Activated CD8-positive, alpha-beta memory T cell treated with anti-CD3 and anti-CD28 coated beads, Interleukin-2, amount 10 ng/mL, durations not matched to agents 7 days and 5 days (primary cell): ENCODE measurements at regions of chr1 and their contacts with region 1.

Region 1: DNA sequence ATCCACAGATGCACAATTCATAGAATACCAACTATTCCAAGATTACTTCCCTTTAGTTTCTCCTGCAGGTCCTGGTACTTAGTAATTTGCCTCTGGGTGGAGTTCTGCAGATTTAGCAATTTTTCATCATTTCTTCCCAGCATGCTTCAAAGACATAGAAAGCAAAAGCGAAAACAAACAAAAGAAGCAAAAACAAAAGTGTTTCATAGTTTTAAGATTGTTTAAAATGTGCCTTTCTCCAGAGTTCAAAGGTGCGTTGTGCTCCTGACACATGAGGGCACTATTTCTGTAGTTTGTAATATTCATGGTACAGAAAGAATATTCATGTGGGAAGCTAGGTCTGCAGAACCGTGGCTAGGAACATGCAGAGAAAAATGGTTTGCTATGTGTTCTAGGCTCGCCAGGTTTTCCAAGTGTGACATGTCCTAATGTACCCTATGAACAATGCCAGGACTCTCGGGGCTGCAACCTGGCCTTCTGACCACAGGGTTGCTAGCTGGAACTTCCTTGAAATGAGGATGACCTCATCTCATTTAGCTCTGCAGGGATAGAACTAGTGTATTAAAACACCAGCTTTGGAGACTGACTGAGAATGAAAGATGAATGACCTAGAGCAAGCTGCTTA is 30.0 kb upstream of the RCSD1 start:
- DNase-seq: peak; percentile 63
- ATAC-seq: peak; percentile 90
- H3K4me3 Mint-ChIP-seq: peak overlapping the region; percentile 58
- H3K27ac Mint-ChIP-seq: peak overlapping the region; percentile 77
- H3K4me1 Mint-ChIP-seq: peaks cover 38% of the 10 kb centered on the region
- H3K27me3 Mint-ChIP-seq: no peaks in the 10 kb centered on the region

Region 2: DNA sequence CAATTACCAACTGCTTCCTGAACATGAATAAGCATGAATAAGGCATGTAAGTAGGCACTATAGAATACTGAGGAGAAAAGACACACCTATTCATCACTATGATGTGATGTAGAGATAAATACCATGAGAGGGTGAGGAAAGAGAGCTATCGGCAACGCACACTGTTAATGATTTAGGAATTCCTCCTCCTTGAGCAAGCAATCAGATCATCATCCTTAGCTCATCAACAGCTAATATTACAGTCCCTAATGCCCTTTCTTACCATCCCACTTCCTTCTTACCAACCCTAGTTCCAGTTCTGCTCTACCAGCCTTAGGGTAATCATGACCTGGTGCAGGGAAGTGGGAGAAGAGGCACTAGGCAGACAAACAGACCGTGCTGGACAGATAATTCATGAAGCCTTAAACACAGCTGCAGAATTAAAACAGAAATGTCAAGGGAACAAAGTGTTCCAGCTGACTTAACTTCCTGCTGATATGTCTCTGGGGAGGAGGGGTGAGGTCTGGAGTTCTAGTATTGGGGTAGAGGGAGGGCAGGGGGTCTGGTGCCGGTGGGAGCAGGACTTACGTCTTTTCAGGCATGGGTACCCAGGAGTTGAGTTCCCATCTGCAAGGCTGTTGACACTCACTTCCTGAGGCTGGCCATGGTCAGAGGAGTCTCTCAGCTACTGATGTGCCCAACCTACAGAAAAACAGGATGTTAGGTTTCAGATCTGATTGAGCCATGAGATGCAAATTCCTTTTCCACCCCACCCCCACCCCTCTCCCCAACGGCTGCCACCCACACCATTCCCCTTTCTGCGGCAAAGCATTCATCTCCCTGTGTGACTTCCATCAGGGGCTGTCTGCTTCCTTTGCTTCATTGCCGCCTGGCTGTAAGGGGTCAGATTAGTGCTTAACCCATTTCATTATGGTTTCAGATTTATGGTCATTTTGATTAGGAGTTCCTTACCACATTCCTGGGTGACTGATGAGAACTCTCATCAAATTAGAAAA is 17.4 kb after region 1 on chr1:
- CTCF ChIA-PET with region 1: interaction called, 17 read pairs
- DNase-seq: peak; percentile 59
- ATAC-seq: peak; percentile 72
- H3K4me3 Mint-ChIP-seq: peak overlapping the region; percentile 53
- H3K27ac Mint-ChIP-seq: peak overlapping the region; percentile 89
- H3K4me1 Mint-ChIP-seq: peaks cover 46% of the 10 kb centered on the region
- H3K27me3 Mint-ChIP-seq: no peaks in the 10 kb centered on the region

Region 3: DNA sequence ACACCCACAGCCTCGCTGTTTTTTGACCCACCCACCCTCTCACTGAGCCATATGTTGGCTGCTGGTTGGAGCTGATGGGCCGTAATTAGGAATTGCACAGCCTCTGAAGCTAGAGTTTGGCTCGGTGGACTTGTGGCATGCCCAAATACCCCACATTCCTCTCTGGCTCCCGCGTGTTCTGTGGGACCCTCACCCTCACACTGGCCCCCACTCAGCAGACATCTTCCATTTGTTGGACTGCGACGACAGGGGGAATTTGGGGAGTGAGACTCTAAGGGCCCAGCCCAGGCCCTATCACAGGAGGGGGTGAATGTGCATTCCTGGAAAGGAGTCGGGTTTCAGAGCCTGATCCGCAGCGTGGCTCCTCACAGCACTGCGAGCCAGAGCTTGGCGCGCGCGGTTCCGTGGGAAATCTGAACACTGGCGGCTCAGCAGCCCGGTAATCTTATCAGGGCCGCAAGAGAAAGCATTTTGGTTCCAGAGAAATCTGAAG is 35.1 kb after region 1 on chr1:
- CTCF ChIA-PET with region 1: interaction called, 53 read pairs
- DNase-seq: peak; percentile 38
- ATAC-seq: no peak
- H3K4me3 Mint-ChIP-seq: no peak overlapping the region
- H3K27ac Mint-ChIP-seq: peak overlapping the region; percentile 14
- H3K4me1 Mint-ChIP-seq: peaks cover 83% of the 10 kb centered on the region
- H3K27me3 Mint-ChIP-seq: no peaks in the 10 kb centered on the region

Region 4: GRCh38 chr1:167676205-167676915 is 76.3 kb after region 1 on chr1:
- CTCF ChIA-PET with region 1: interaction called, 13 read pairs
- DNase-seq: no peak
- ATAC-seq: no peak
- H3K4me3 Mint-ChIP-seq: no peak overlapping the region
- H3K27ac Mint-ChIP-seq: peak overlapping the region; percentile 52
- H3K4me1 Mint-ChIP-seq: peaks cover 28% of the 10 kb centered on the region
- H3K27me3 Mint-ChIP-seq: no peaks in the 10 kb centered on the region

Region 5: DNA sequence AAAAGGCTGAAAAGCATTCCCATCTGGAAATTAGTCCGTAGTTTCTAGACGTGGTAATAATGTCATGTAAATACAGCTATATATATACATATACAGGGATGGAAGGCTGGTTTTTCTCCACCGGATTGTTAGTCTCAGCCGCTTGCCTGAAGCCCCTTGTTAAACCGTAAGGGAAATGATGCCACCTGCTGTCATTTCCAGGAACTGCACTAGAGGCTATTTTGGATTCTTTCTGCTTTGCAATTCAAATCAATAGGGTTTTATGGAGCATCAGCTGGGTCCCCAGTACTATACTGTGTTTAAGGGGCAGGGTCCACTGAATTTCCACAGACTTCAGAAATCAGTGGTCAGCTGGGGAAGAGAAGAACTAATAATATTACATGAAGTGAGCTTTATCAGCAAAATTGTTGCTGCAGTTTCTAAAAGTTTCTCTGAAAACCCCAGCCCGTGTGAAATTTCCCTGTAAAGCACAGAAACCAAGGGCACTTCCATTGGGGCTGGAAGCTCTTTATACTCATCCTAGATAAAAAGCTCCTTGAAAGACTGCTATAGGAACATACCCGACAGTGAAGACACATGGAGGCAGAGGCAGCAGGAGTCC is 88.0 kb after region 1 on chr1:
- CTCF ChIA-PET with region 1: interaction called, 84 read pairs
- DNase-seq: peak; percentile 88
- ATAC-seq: peak; percentile 66
- H3K4me3 Mint-ChIP-seq: no peak overlapping the region
- H3K27ac Mint-ChIP-seq: peak overlapping the region; percentile 21
- H3K4me1 Mint-ChIP-seq: peaks cover 6% of the 10 kb centered on the region
- H3K27me3 Mint-ChIP-seq: no peaks in the 10 kb centered on the region

Region 6: GRCh38 chr1:168082008-168082876 is 482.2 kb after region 1 on chr1:
- CTCF ChIA-PET with region 1: interaction called, 12 read pairs
- DNase-seq: peak; percentile 83
- ATAC-seq: peak; percentile 88
- H3K4me3 Mint-ChIP-seq: no peak overlapping the region
- H3K27ac Mint-ChIP-seq: no peak overlapping the region
- H3K4me1 Mint-ChIP-seq: peaks cover 3% of the 10 kb centered on the region
- H3K27me3 Mint-ChIP-seq: no peaks in the 10 kb centered on the region